B cell (primary cell): ENCODE measurements at regions of chr21 and their contacts with region 1.

Region 1: DNA sequence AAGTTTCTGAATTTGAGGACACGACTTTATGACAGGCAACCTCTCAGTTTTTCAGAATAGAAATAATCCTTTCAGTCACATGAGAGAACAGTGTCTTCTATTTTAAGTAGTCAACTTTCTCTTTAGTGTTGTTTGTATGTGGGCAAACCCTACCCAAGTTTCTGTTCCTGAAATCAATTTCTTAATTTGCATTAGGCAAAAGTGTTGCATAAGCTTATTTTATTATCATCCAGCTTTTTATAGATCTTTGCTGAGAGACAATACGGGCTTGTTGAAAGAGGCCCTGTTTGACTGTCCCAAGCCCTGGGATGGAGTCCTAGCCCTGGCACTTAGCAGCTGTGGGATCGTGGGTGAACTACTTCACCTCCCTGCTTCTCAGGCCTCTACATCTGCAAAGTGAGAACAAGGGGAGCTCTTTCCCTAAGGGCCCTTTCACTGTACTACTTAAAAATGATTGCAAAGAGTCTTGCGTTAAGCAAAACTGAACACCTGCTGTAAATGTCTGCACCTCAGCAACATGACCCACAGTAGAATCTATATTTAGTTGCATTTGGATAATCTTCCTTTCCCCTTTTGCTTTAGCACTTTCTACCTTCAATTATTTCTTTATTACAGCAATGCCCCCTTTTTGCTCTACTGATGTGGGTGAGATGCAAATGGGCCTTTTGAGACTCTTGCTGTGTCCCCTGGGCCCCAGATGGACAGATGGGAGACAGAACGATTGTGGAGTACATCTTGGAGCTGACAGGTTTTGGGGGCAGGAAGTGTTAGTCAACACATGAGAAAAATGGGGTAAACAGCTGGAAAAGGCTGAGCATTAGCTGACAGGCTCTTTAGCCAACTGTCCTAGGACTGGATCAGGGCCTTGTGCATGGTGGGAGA is 41.0 kb upstream of the SCAF4 start:
- DNase-seq: peak; percentile 82
- ATAC-seq: peak; percentile 85
- H3K4me3 ChIP-seq: peak overlapping the region in 3 of 5 experiments; percentile 6 to 34 (median 20)
- H3K4me3 Mint-ChIP-seq: peak overlapping the region; percentile 64
- H3K27ac ChIP-seq: peak overlapping the region; percentile 94 to 96
- H3K27ac Mint-ChIP-seq: peak overlapping the region; percentile 94
- H3K4me1 ChIP-seq: peaks cover 51 to 53% of the 10 kb centered on the region in 2 donors
- H3K4me1 Mint-ChIP-seq: peaks cover 51% of the 10 kb centered on the region
- H3K27me3 ChIP-seq: no peaks in the 10 kb centered on the region
- H3K27me3 Mint-ChIP-seq: no peaks in the 10 kb centered on the region
- CTCF ChIP-seq: no peak

Region 2: GRCh38 chr21:31265366-31266013 is 507.4 kb before region 1 on chr21:
- CTCF ChIA-PET with region 1: no interaction called
- POLR2A ChIA-PET with region 1: no interaction called
- intact Hi-C with region 1: no loop called
- DNase-seq: no peak
- ATAC-seq: no peak
- H3K4me3 ChIP-seq: no peak overlapping the region
- H3K4me3 Mint-ChIP-seq: no peak overlapping the region
- H3K27ac ChIP-seq: no peak overlapping the region
- H3K27ac Mint-ChIP-seq: no peak overlapping the region
- H3K4me1 ChIP-seq: no peaks in the 10 kb centered on the region
- H3K4me1 Mint-ChIP-seq: no peaks in the 10 kb centered on the region
- H3K27me3 ChIP-seq: no peaks in the 10 kb centered on the region
- H3K27me3 Mint-ChIP-seq: peaks cover 14% of the 10 kb centered on the region
- CTCF ChIP-seq: no peak

Region 3: GRCh38 chr21:32278518-32279376 is 505.8 kb after region 1 on chr21 and contains the start of gene MIS18A:
- CTCF ChIA-PET with region 1: no interaction called
- POLR2A ChIA-PET with region 1: no interaction called
- intact Hi-C with region 1: loop called (anchors 1 kb)
- DNase-seq: peak; percentile 97
- ATAC-seq: peak; percentile 97
- H3K4me3 ChIP-seq: peak within 1 kb of the TSS; percentile 70 to 86 (median 82)
- H3K4me3 Mint-ChIP-seq: peak within 1 kb of the TSS; percentile 100
- H3K27ac ChIP-seq: peak within 1 kb of the TSS; percentile 29 to 44
- H3K27ac Mint-ChIP-seq: peak within 1 kb of the TSS; percentile 91
- H3K4me1 ChIP-seq: peaks cover 16 to 22% of the 10 kb centered on the region in 2 donors
- H3K4me1 Mint-ChIP-seq: peaks cover 22% of the 10 kb centered on the region
- H3K27me3 ChIP-seq: no peaks in the 10 kb centered on the region
- H3K27me3 Mint-ChIP-seq: no peaks in the 10 kb centered on the region
- CTCF ChIP-seq: no peak
- total RNA-seq, gene MIS18A: 8.8 and 10.4 TPM in 2 replicates

Region 4: DNA sequence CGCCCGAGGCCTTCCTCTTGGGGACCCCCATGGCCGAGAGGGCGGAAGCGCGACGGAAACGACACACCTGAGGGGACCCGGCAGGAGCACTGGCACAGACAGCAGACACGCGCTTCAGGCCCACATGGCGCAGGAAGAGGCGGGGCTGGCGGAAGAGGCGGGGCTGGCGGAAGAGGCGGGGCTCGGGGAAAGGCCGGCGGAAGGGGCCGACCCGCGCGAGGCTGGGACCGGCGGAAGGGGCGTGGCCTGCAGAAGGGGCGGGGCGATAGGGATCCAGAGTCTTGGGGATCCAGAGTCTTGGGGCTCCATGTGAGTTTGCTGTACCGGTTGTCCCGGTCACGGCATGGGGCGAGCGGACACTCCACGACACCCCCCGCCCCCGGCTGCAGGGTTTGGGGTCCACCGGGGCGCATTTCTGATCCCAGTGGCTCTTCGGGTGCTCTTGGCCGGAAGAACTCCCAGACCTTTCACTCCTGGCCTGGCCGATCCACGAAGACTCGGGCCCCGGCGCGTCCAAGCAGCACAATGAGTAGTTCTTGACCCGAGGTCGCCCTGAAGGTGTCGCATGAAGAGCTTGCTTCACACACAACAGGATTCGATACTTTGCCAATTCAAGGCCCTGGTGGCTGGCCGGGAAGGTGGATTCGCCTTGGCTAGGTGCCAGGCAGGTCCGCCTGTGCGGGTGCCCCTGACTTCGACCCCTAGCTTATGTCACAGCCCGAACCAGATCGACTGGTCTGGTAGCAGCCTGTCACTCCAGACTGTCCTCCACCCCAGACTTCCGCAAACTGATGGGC is 620.2 kb after region 1 on chr21 and contains the start of gene URB1:
- CTCF ChIA-PET with region 1: no interaction called
- POLR2A ChIA-PET with region 1: no interaction called
- intact Hi-C with region 1: loop called (anchors 10 kb)
- DNase-seq: peak; percentile 93
- ATAC-seq: peak; percentile 96
- H3K4me3 ChIP-seq: peak within 1 kb of the TSS; percentile 67 to 99 (median 95)
- H3K4me3 Mint-ChIP-seq: peak within 1 kb of the TSS; percentile 92
- H3K27ac ChIP-seq: peak within 1 kb of the TSS; percentile 74 to 90
- H3K27ac Mint-ChIP-seq: peak within 1 kb of the TSS; percentile 90
- H3K4me1 ChIP-seq: peaks cover 18 to 24% of the 10 kb centered on the region in 2 donors
- H3K4me1 Mint-ChIP-seq: peaks cover 39% of the 10 kb centered on the region
- H3K27me3 ChIP-seq: peaks cover 0 to 11% (median 6%) of the 10 kb centered on the region in 4 experiments
- H3K27me3 Mint-ChIP-seq: peaks cover 11% of the 10 kb centered on the region
- CTCF ChIP-seq: no peak
- total RNA-seq, gene URB1: 14.9 and 15.2 TPM in 2 replicates

Region 5: GRCh38 chr21:32712043-32712442 is 939.1 kb after region 1 on chr21:
- CTCF ChIA-PET with region 1: no interaction called
- POLR2A ChIA-PET with region 1: interaction called, 4 read pairs
- intact Hi-C with region 1: loop called (anchors 5 kb)
- DNase-seq: peak; percentile 88
- ATAC-seq: peak; percentile 96
- H3K4me3 ChIP-seq: peak overlapping the region in 1 of 5 experiments; percentile 0
- H3K4me3 Mint-ChIP-seq: peak overlapping the region; percentile 67
- H3K27ac ChIP-seq: no peak overlapping the region
- H3K27ac Mint-ChIP-seq: peak overlapping the region; percentile 61
- H3K4me1 ChIP-seq: peaks cover 22 to 30% of the 10 kb centered on the region in 2 donors
- H3K4me1 Mint-ChIP-seq: peaks cover 20% of the 10 kb centered on the region
- H3K27me3 ChIP-seq: peaks cover 2 to 60% (median 59%) of the 10 kb centered on the region in 4 experiments
- H3K27me3 Mint-ChIP-seq: peaks cover 52% of the 10 kb centered on the region
- CTCF ChIP-seq: no peak